ENCODE measurements at regions of chr9 and their contacts with region 1.

Region 1: DNA sequence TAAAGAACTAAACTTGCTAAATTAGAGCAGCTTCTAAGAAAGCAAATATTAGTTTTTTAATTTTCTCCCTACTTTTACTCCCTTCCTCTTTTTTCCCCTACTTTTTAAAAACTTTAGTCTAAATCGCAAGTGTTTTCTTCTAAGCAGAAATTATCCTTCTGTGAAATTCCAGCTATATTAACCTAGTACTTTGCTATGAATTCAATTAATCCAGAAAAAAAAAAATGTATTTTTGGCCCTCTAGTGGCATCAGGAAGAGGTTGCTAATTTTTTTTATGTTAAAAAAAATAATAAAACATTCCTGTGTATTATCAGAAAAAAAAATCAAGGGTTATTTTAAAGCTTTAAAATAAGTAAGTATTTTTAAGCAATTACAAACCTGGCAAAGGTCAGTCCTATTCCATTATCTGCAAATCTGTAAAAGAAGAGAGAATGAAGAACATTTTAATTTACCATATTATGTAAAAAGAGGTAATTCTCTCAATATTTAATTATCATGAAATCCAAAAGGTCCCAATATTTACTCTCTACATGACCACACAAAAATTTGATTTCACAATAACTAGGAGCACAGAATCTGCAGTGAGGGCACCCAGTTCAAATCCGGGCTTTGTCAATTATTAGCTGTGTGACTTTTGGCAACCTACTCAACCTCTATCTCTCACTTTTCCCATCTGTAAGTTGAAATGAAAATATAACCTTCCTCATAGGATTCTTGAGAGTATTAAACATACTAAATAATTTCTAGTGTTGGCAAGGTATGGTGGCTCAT is 52.0 kb downstream of the CEMIP2 start:
- DNase-seq: no peak
- ATAC-seq: no peak
- H3K4me3 ChIP-seq: no peak overlapping the region
- H3K27ac ChIP-seq: no peak overlapping the region
- H3K4me1 ChIP-seq: no peaks in the 10 kb centered on the region; the same call in 1 of the 2 replicates
- H3K27me3 ChIP-seq: no peaks in the 10 kb centered on the region
- CTCF ChIP-seq: peak; percentile 50
- POLR2A ChIP-seq: no peak
- RAD21 ChIP-seq: peak; percentile 36; the same call in 1 of the 2 replicates

Region 2: GRCh38 chr9:71703172-71703872 is 13.0 kb before region 1 on chr9:
- CTCF ChIA-PET with region 1: interaction called, 11 read pairs
- POLR2A ChIA-PET with region 1: no interaction called
- dilution Hi-C with region 1: no loop called
- in situ Hi-C with region 1: no loop called
- intact Hi-C with region 1: no loop called
- DNase-seq: no peak
- ATAC-seq: no peak
- H3K4me3 ChIP-seq: no peak overlapping the region
- H3K27ac ChIP-seq: no peak overlapping the region
- H3K4me1 ChIP-seq: no peaks in the 10 kb centered on the region; the same call in 1 of the 2 replicates
- H3K27me3 ChIP-seq: no peaks in the 10 kb centered on the region
- CTCF ChIP-seq: no peak
- POLR2A ChIP-seq: no peak
- RAD21 ChIP-seq: no peak

Measured in IMR-90 (cell line).